H1 (cell line): ENCODE measurements at regions of chr10 and their contacts with region 1.

Region 1: DNA sequence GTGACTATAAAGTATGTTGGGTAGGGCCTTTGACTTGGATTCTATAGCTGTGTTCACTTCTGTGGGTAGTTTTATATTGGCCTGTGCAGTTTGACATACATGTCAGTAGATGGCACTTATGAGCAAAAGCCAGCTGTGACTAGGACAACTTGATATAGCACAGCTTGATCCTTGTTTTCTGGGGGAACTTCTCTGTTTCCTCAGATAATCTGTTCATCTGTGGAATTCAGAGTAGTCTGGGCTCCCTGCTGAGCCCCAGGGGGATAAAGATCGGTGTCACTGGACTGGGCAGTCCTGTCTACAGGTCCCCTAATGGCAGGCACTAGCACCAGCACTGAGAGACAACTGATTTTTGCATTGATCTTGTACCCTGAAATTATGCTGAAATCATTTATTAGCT is 25.4 kb downstream of the CYP2C9 start:
- DNase-seq: peak; percentile 5 to 48
- H3K4me3 ChIP-seq: no peak overlapping the region
- H3K27ac ChIP-seq: no peak overlapping the region
- H3K4me1 ChIP-seq: no peaks in the 10 kb centered on the region
- H3K27me3 ChIP-seq: no peaks in the 10 kb centered on the region
- CTCF ChIP-seq: peak in 2 of 3 experiments; percentile 64 to 75; a peak in 3 of 4 replicates
- EP300 ChIP-seq: no peak
- POLR2A ChIP-seq: no peak
- RAD21 ChIP-seq: peak; percentile 66 to 75

Region 2: GRCh38 chr10:94890264-94891022 is 73.5 kb before region 1 on chr10:
- CTCF ChIA-PET with region 1: no interaction called
- POLR2A ChIA-PET with region 1: no interaction called
- DNase-seq: no peak
- H3K4me3 ChIP-seq: no peak overlapping the region
- H3K27ac ChIP-seq: no peak overlapping the region
- H3K4me1 ChIP-seq: no peaks in the 10 kb centered on the region
- H3K27me3 ChIP-seq: no peaks in the 10 kb centered on the region
- CTCF ChIP-seq: peak in 2 of 3 experiments; percentile 16 to 32; a peak in 3 of 4 replicates
- EP300 ChIP-seq: no peak
- POLR2A ChIP-seq: no peak
- RAD21 ChIP-seq: peak in 1 of 2 experiments; percentile 21; a peak in 2 of 4 replicates

Region 3: GRCh38 chr10:94902570-94902969 is 61.3 kb before region 1 on chr10:
- CTCF ChIA-PET with region 1: no interaction called
- POLR2A ChIA-PET with region 1: no interaction called
- DNase-seq: no peak
- H3K4me3 ChIP-seq: no peak overlapping the region
- H3K27ac ChIP-seq: no peak overlapping the region
- H3K4me1 ChIP-seq: no peaks in the 10 kb centered on the region
- H3K27me3 ChIP-seq: no peaks in the 10 kb centered on the region
- CTCF ChIP-seq: no peak
- EP300 ChIP-seq: no peak
- POLR2A ChIP-seq: no peak
- RAD21 ChIP-seq: no peak

Region 4: GRCh38 chr10:94983555-94983954 is 19.7 kb after region 1 on chr10:
- CTCF ChIA-PET with region 1: interaction called, 11 read pairs
- POLR2A ChIA-PET with region 1: no interaction called
- DNase-seq: no peak
- H3K4me3 ChIP-seq: no peak overlapping the region
- H3K27ac ChIP-seq: no peak overlapping the region
- H3K4me1 ChIP-seq: no peaks in the 10 kb centered on the region
- H3K27me3 ChIP-seq: no peaks in the 10 kb centered on the region
- CTCF ChIP-seq: no peak
- EP300 ChIP-seq: no peak
- POLR2A ChIP-seq: no peak
- RAD21 ChIP-seq: no peak

Region 5: GRCh38 chr10:94997741-94998174 is 33.9 kb after region 1 on chr10:
- CTCF ChIA-PET with region 1: interaction called, 15 read pairs
- POLR2A ChIA-PET with region 1: no interaction called
- DNase-seq: peak in 1 of 2 experiments; percentile 61
- H3K4me3 ChIP-seq: peak overlapping the region; percentile 10 to 49 (median 13); a peak in 3 of 8 replicates
- H3K27ac ChIP-seq: no peak overlapping the region
- H3K4me1 ChIP-seq: peaks cover 0 to 10% (median 2%) of the 10 kb centered on the region in 4 experiments; a peak in 2 of 7 replicates
- H3K27me3 ChIP-seq: no peaks in the 10 kb centered on the region; a peak in 1 of 7 replicates
- CTCF ChIP-seq: no peak
- EP300 ChIP-seq: peak in 1 of 2 experiments; percentile 96; a peak in 2 of 3 replicates
- POLR2A ChIP-seq: no peak
- RAD21 ChIP-seq: no peak